ENCODE measurements at regions of chr1 and their contacts with region 1.

Region 1: GRCh38 chr1:247146671-247147070 is 25.1 kb downstream of the ZNF124 start:
- DNase-seq: no peak
- ATAC-seq: peak; percentile 83
- H3K4me3 Mint-ChIP-seq: no peak overlapping the region
- H3K27ac Mint-ChIP-seq: no peak overlapping the region
- H3K4me1 Mint-ChIP-seq: peaks cover 5% of the 10 kb centered on the region
- H3K27me3 Mint-ChIP-seq: no peaks in the 10 kb centered on the region
- CTCF ChIP-seq: peak; percentile 56

Region 2: GRCh38 chr1:247131236-247131635 is 15.4 kb before region 1 on chr1:
- CTCF ChIA-PET with region 1: interaction called, 10 read pairs
- POLR2A ChIA-PET with region 1: no interaction called
- DNase-seq: no peak
- ATAC-seq: peak; percentile 37; the same call in 1 of the 2 replicates
- H3K4me3 Mint-ChIP-seq: no peak overlapping the region
- H3K27ac Mint-ChIP-seq: no peak overlapping the region
- H3K4me1 Mint-ChIP-seq: peaks cover 16% of the 10 kb centered on the region
- H3K27me3 Mint-ChIP-seq: peaks cover 12% of the 10 kb centered on the region; the same call in 1 of the 2 replicates
- CTCF ChIP-seq: no peak

Region 3: DNA sequence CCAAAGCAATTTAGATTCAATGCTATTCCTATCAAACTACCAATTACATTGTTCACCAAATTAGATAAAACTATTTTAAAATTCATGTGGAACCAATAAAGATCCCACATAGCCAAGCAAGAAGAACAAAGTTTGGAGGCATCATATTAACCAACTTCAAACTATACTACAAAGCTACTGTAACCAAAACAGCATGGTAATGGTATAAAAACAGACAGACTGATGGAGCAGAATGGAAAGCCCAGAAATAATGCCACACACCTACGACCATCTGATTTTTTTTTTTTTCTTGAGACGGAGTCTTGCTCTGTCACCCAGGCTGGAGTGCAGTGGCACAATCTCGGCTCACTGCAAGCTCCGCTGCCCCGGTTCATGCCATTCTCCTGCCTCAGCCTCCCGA is 18.0 kb after region 1 on chr1:
- CTCF ChIA-PET with region 1: interaction called, 15 read pairs
- POLR2A ChIA-PET with region 1: no interaction called
- DNase-seq: no peak
- ATAC-seq: no peak
- H3K4me3 Mint-ChIP-seq: no peak overlapping the region
- H3K27ac Mint-ChIP-seq: no peak overlapping the region
- H3K4me1 Mint-ChIP-seq: peaks cover 45% of the 10 kb centered on the region
- H3K27me3 Mint-ChIP-seq: no peaks in the 10 kb centered on the region; the same call in 1 of the 2 replicates
- CTCF ChIP-seq: no peak